B cell (primary cell): ENCODE measurements at regions of chr9 and their contacts with region 1.

Region 1: GRCh38 chr9:30723656-30724055 is 1660.8 kb upstream of the ACO1 start:
- DNase-seq: no peak
- ATAC-seq: no peak
- H3K4me3 ChIP-seq: no peak overlapping the region
- H3K4me3 Mint-ChIP-seq: no peak overlapping the region
- H3K27ac ChIP-seq: no peak overlapping the region
- H3K27ac Mint-ChIP-seq: no peak overlapping the region
- H3K4me1 ChIP-seq: no peaks in the 10 kb centered on the region
- H3K4me1 Mint-ChIP-seq: no peaks in the 10 kb centered on the region
- H3K27me3 ChIP-seq: no peaks in the 10 kb centered on the region
- H3K27me3 Mint-ChIP-seq: no peaks in the 10 kb centered on the region
- CTCF ChIP-seq: no peak

Region 2: GRCh38 chr9:30775236-30775635 is 51.6 kb after region 1 on chr9:
- CTCF ChIA-PET with region 1: no interaction called
- POLR2A ChIA-PET with region 1: no interaction called
- intact Hi-C with region 1: loop called (anchors 10 kb)
- DNase-seq: no peak
- ATAC-seq: no peak
- H3K4me3 ChIP-seq: no peak overlapping the region
- H3K4me3 Mint-ChIP-seq: no peak overlapping the region
- H3K27ac ChIP-seq: no peak overlapping the region
- H3K27ac Mint-ChIP-seq: no peak overlapping the region
- H3K4me1 ChIP-seq: no peaks in the 10 kb centered on the region
- H3K4me1 Mint-ChIP-seq: no peaks in the 10 kb centered on the region
- H3K27me3 ChIP-seq: no peaks in the 10 kb centered on the region
- H3K27me3 Mint-ChIP-seq: no peaks in the 10 kb centered on the region
- CTCF ChIP-seq: no peak